Naive thymus-derived CD4-positive, alpha-beta T cell (primary cell): ENCODE measurements at regions of chr3 and their contacts with region 1.

Region 1: GRCh38 chr3:129100274-129100673 is 21.3 kb downstream of the RAB43 start:
- DNase-seq: no peak
- ATAC-seq: no peak
- H3K4me3 ChIP-seq: no peak overlapping the region
- H3K4me3 Mint-ChIP-seq: peak overlapping the region in 6 of 10 donors; percentile 2 to 77 (median 41)
- H3K27ac ChIP-seq: peak overlapping the region; percentile 11
- H3K27ac Mint-ChIP-seq: peak overlapping the region in 8 of 9 donors; percentile 21 to 95 (median 76)
- H3K4me1 ChIP-seq: peaks cover 3 to 61% of the 10 kb centered on the region in 2 donors
- H3K4me1 Mint-ChIP-seq: peaks cover 56 to 92% (median 78%) of the 10 kb centered on the region in 7 donors
- H3K27me3 ChIP-seq: no peaks in the 10 kb centered on the region
- H3K27me3 Mint-ChIP-seq: no peaks in the 10 kb centered on the region

Region 2: DNA sequence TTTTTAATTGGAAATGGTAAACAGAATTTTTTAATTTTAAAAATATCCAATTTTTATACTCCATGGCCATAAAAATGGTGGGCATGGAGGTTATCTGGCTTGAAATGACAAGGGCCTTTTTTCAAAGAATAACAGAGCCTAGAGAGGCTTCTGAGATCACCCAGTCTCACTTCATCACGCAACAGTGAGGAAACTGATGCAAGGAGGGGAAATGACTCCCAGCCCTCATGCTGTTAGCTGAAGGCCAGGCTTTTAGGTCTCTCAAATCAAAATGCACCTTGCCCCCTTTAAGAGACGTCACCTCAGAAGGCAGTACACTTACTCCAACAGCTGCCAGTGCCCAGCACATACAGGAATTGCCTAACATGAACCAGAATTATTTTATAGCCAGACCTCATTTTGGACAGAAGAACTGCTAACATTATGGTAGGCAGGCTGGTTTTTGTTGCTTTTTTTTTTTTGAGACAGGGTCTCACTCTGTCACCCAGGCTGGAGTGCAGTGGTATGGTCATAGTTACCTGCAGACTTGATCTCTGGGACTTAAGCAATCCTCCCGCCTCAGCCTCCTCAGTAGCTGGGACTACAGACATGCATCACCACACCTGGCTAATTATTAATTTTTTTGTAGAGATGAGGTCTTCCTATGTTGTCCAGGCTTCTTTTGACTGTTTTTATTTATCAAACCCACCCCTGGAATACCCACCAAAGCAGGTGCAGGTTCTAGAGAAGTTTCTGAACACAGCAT is 12.2 kb after region 1 on chr3:
- CTCF ChIA-PET with region 1: interaction called, 4 read pairs
- POLR2A ChIA-PET with region 1: interaction called, 78 read pairs
- intact Hi-C with region 1: loop called (anchors 1 to 2 kb)
- DNase-seq: peak in 3 of 9 donors; percentile 18 to 53 (median 26)
- ATAC-seq: peak; percentile 74
- H3K4me3 ChIP-seq: no peak overlapping the region
- H3K4me3 Mint-ChIP-seq: peak overlapping the region; percentile 47 to 80 (median 60)
- H3K27ac ChIP-seq: peak overlapping the region; percentile 44
- H3K27ac Mint-ChIP-seq: peak overlapping the region; percentile 44 to 97 (median 91)
- H3K4me1 ChIP-seq: peaks cover 8 to 78% of the 10 kb centered on the region in 2 donors
- H3K4me1 Mint-ChIP-seq: peaks cover 45 to 92% (median 81%) of the 10 kb centered on the region in 7 donors
- H3K27me3 ChIP-seq: no peaks in the 10 kb centered on the region
- H3K27me3 Mint-ChIP-seq: no peaks in the 10 kb centered on the region

Region 3: DNA sequence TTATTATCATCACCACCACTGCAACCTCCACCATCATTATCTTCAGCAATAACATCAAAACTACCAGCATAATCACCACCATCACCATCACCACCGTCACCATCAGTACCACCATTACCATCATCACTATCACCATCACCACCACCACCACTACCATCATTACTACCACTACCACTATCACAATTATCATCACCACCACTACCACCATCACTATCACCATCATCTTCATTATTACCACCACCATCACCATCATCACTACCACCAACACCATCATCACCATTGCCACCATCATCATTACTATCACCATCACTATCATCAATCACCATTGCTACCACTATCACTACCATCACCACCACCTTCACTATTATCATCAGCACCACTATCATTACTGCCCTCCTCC is 1136.1 kb after region 1 on chr3:
- CTCF ChIA-PET with region 1: no interaction called
- POLR2A ChIA-PET with region 1: no interaction called
- intact Hi-C with region 1: no loop called
- DNase-seq: no peak
- ATAC-seq: no peak
- H3K4me3 ChIP-seq: no peak overlapping the region
- H3K4me3 Mint-ChIP-seq: no peak overlapping the region
- H3K27ac ChIP-seq: no peak overlapping the region
- H3K27ac Mint-ChIP-seq: no peak overlapping the region
- H3K4me1 ChIP-seq: no peaks in the 10 kb centered on the region
- H3K4me1 Mint-ChIP-seq: no peaks in the 10 kb centered on the region
- H3K27me3 ChIP-seq: no peaks in the 10 kb centered on the region
- H3K27me3 Mint-ChIP-seq: peaks cover 2 to 11% (median 10%) of the 10 kb centered on the region in 5 donors